ENCODE measurements at regions of chr1 and their contacts with region 1.

Region 1: DNA sequence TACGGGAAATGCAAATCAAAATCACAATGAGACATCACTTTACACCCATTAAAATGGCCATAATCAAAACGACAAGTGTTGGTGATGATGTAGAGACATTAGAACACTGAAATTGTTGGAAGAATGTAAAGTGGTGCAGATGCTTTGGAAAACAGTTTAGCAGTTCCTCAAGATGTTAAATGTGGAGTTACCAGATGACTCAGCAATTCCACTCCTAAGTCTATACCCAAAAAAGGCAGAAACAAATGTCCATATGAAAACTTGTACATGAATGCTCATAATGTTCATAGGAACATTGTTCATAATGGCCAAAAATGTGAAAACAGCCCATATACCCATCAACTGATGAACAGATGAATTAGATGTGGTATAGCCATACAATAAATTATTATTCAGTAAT is 267.4 kb downstream of the KCNH1 start:
- DNase-seq: no peak
- H3K4me3 ChIP-seq: no peak overlapping the region
- H3K27ac ChIP-seq: no peak overlapping the region
- H3K4me1 ChIP-seq: no peaks in the 10 kb centered on the region
- H3K27me3 ChIP-seq: peaks cover 11% of the 10 kb centered on the region
- CTCF ChIP-seq: no peak

Region 2: GRCh38 chr1:210910020-210910575 is 43.6 kb after region 1 on chr1:
- CTCF ChIA-PET with region 1: no interaction called
- dilution Hi-C with region 1: loop called (anchors 5 kb)
- in situ Hi-C with region 1: no loop called
- intact Hi-C with region 1: no loop called
- DNase-seq: no peak
- H3K4me3 ChIP-seq: no peak overlapping the region
- H3K27ac ChIP-seq: no peak overlapping the region
- H3K4me1 ChIP-seq: no peaks in the 10 kb centered on the region
- H3K27me3 ChIP-seq: peaks cover 4% of the 10 kb centered on the region
- CTCF ChIP-seq: no peak